ENCODE measurements at regions of chr2 and their contacts with region 1.

Region 1: DNA sequence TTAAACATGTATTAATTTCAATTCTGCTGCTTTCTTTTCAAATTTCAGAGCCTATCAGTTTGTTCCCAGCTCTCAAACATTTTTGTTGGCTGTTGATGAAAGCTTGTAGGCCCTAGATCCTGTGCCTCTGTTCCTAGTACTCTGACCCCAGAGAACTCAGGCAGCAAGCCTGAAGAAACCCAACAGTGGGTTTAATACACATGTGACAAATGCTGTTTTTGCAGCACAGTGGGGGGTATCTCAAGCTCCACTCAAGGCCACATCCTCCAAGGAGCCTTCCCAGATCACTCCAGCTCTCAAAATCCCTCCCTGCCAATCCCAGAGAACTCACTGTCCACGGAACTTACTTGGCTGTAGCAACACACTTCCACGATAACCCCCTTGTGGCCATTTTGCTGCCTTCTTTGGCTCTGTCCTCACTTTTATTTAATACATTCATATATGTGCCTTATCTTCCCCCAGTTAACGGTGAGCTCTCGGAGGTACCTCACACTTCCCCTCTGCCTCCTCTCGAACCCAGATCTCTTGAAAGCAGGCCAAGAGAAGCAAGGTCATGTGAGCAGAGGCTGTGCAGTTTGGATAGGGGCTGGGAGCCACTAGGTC is 122.4 kb downstream of the TNS1 start:
- DNase-seq: no peak
- ATAC-seq: no peak
- H3K4me3 ChIP-seq: no peak overlapping the region
- H3K27ac ChIP-seq: no peak overlapping the region
- H3K4me1 ChIP-seq: peaks cover 0 to 3% of the 10 kb centered on the region in 2 experiments; a peak in 3 of 5 replicates
- H3K27me3 ChIP-seq: no peaks in the 10 kb centered on the region; a peak in 1 of 5 replicates
- CTCF ChIP-seq: 0 out of 6 replicates have a peak, but pooled peaks of 1 of the 3 experiments have one; percentile 25
- EP300 ChIP-seq: no peak
- POLR2A ChIP-seq: no peak
- RAD21 ChIP-seq: no peak

Region 2: DNA sequence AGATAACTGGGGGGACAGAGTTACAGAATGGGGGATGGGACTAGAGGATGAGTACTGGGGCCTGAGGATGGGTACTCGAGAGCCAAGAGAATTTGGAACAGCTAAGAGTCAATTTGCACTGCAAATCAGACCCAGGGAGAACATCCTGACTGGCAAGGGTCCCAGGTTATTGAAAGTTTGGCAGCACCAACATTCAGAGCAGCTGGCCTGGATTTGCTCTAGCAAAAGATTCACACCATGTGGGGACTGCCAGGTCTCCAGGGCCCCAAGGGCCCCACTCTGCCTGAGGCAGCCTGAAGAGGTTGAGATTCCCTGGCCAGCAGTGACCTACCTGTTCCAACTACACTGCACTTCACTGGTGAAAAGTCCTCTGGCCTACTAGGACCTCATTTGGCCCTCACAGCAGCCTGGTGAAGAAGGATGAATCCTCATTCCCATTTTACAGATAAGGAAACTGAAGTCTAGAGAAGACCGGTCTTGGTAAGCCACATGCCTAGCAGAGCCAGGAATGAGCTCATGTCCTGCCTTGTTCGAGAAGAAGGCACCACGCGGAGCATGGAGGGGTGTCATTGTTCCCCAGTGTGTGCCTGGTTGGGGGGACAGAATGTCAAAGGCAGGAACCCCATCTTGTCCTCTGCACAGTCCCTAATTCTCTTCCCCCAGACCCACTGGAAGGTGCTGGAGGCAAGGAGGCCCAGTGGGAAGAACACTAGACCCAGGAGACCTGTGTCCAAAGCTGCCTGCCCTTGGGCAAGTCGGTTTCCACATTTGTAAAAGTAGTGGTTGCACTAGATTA is 136.2 kb before region 1 on chr2:
- CTCF ChIA-PET with region 1: no interaction called
- POLR2A ChIA-PET with region 1: no interaction called
- in situ Hi-C with region 1: no loop called
- intact Hi-C with region 1: no loop called
- DNase-seq: no peak
- ATAC-seq: no peak
- H3K4me3 ChIP-seq: no peak overlapping the region
- H3K27ac ChIP-seq: no peak overlapping the region
- H3K4me1 ChIP-seq: no peaks in the 10 kb centered on the region
- H3K27me3 ChIP-seq: peaks cover 0 to 17% of the 10 kb centered on the region in 2 experiments; a peak in 2 of 5 replicates
- CTCF ChIP-seq: no peak
- EP300 ChIP-seq: no peak
- POLR2A ChIP-seq: no peak
- RAD21 ChIP-seq: no peak

Region 3: GRCh38 chr2:217804786-217805667 is 75.4 kb before region 1 on chr2:
- CTCF ChIA-PET with region 1: no interaction called
- POLR2A ChIA-PET with region 1: interaction called, 3 read pairs
- in situ Hi-C with region 1: no loop called
- intact Hi-C with region 1: loop called (anchors 5 kb)
- DNase-seq: no peak
- ATAC-seq: peak; percentile 56
- H3K4me3 ChIP-seq: no peak overlapping the region
- H3K27ac ChIP-seq: no peak overlapping the region
- H3K4me1 ChIP-seq: peaks cover 0 to 17% of the 10 kb centered on the region in 2 experiments; a peak in 4 of 5 replicates
- H3K27me3 ChIP-seq: no peaks in the 10 kb centered on the region; a peak in 1 of 5 replicates
- CTCF ChIP-seq: no peak
- EP300 ChIP-seq: no peak
- POLR2A ChIP-seq: no peak
- RAD21 ChIP-seq: no peak

Measured in K562 (cell line).